WTC11 (cell line): ENCODE measurements at regions of chr11 and their contacts with region 1.

Region 1: GRCh38 chr11:116073854-116074837 is 569.9 kb upstream of the CADM1 start:
- DNase-seq: no peak
- ATAC-seq: no peak
- H3K4me3 Mint-ChIP-seq: no peak overlapping the region
- H3K27ac Mint-ChIP-seq: no peak overlapping the region
- H3K4me1 Mint-ChIP-seq: peaks cover 10% of the 10 kb centered on the region
- H3K27me3 Mint-ChIP-seq: peaks cover 11% of the 10 kb centered on the region
- CTCF ChIP-seq: no peak

Region 2: DNA sequence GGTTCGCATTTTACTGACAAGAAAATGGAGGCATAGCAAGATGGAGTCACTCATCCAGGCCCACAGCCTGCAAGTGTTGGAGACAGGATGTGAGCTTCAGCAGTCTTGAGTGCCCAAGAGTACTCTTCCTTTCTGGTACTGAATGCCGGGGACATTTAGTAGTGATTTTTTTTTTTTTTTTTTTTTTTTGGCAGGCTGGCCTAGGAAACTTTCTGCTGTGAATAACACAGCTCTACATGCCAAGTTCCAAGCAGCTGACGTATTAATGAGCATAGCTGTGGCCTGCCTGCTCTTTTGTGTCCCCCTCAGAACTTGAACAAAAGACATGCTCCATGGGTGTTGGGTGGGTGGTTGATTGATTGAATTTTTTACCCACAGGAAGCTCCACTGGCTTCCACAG is 374.4 kb before region 1 on chr11:
- CTCF ChIA-PET with region 1: no interaction called
- POLR2A ChIA-PET with region 1: no interaction called
- DNase-seq: no peak
- ATAC-seq: no peak
- H3K4me3 Mint-ChIP-seq: no peak overlapping the region
- H3K27ac Mint-ChIP-seq: no peak overlapping the region
- H3K4me1 Mint-ChIP-seq: peaks cover 20% of the 10 kb centered on the region
- H3K27me3 Mint-ChIP-seq: peaks cover 7% of the 10 kb centered on the region; the same call in 1 of the 2 replicates
- CTCF ChIP-seq: no peak

Region 3: GRCh38 chr11:115990004-115990447 is 84.1 kb before region 1 on chr11:
- CTCF ChIA-PET with region 1: interaction called, 35 read pairs
- POLR2A ChIA-PET with region 1: no interaction called
- DNase-seq: peak; percentile 80
- ATAC-seq: peak; percentile 99
- H3K4me3 Mint-ChIP-seq: peak overlapping the region; percentile 53
- H3K27ac Mint-ChIP-seq: no peak overlapping the region
- H3K4me1 Mint-ChIP-seq: peaks cover 15% of the 10 kb centered on the region
- H3K27me3 Mint-ChIP-seq: peaks cover 3% of the 10 kb centered on the region; the same call in 1 of the 2 replicates
- CTCF ChIP-seq: peak; percentile 68

Region 4: DNA sequence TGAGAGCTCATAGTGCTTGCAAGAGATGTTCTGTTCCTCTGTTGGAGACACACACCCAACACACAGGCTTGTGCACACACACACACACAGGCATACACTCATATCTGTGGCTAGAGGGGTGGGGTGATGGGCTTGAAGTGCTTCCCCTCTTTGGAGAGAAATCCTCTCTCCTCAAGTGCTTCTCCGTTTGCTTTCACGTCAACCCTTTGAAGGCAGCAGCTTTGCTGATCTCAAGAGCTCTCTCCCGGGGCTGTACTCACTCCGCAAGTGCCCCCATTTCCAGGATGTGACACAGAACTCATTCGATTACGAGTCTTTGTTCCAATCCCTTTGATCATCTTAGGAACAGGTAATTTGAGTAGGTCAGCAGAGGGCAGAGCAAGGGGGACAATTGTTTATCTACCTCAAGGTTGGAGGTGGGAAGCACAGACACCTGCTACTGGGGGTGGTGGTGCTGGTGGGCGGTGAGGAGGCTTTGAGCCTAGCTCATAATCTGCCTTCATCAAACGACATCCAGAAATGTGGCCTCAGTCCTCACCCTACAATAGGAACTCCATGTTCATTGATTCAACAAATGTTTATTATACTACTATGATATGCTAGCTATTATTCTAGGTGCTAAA is 40.1 kb before region 1 on chr11:
- CTCF ChIA-PET with region 1: interaction called, 10 read pairs
- POLR2A ChIA-PET with region 1: no interaction called
- DNase-seq: no peak
- ATAC-seq: peak; percentile 48; the same call in 1 of the 2 replicates
- H3K4me3 Mint-ChIP-seq: no peak overlapping the region
- H3K27ac Mint-ChIP-seq: no peak overlapping the region
- H3K4me1 Mint-ChIP-seq: peaks cover 31% of the 10 kb centered on the region
- H3K27me3 Mint-ChIP-seq: no peaks in the 10 kb centered on the region
- CTCF ChIP-seq: no peak

Region 5: GRCh38 chr11:116086426-116086825 is 12.3 kb after region 1 on chr11:
- CTCF ChIA-PET with region 1: interaction called, 16 read pairs
- POLR2A ChIA-PET with region 1: no interaction called
- DNase-seq: no peak
- ATAC-seq: peak; percentile 79
- H3K4me3 Mint-ChIP-seq: no peak overlapping the region
- H3K27ac Mint-ChIP-seq: no peak overlapping the region
- H3K4me1 Mint-ChIP-seq: peaks cover 24% of the 10 kb centered on the region
- H3K27me3 Mint-ChIP-seq: peaks cover 8% of the 10 kb centered on the region; the same call in 1 of the 2 replicates
- CTCF ChIP-seq: no peak